OCI-LY7 (cell line): ENCODE measurements at regions of chr13 and their contacts with region 1.

Region 1: GRCh38 chr13:36796052-36796451 is 23.0 kb upstream of the RFXAP start:
- DNase-seq: no peak
- H3K4me3 ChIP-seq: no peak overlapping the region
- H3K27ac ChIP-seq: no peak overlapping the region
- H3K4me1 ChIP-seq: no peaks in the 10 kb centered on the region
- CTCF ChIP-seq: no peak

Region 2: DNA sequence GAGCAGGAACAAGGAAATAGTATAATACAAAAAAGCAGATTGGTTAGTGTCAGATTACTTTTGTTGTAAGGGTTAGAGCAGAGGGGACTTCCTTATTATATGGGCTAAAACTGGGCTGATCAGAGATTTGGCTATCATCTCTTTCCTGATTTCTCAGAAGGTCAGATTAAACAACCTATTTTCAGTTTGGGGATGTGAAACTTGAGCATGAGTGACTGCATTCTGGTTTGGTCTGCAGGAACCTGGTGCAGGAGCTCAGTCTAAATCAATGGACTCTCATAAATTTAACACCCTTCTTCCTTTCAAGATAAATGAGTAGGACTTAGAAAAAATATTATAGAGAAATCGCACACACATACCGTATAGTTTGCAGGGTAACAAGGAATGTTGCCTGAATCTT is 10.1 kb after region 1 on chr13:
- CTCF ChIA-PET with region 1: no interaction called
- POLR2A ChIA-PET with region 1: interaction called, 15 read pairs
- intact Hi-C with region 1: no loop called
- DNase-seq: peak; percentile 79
- H3K4me3 ChIP-seq: peak overlapping the region; percentile 28
- H3K27ac ChIP-seq: peak overlapping the region; percentile 41
- H3K4me1 ChIP-seq: peaks cover 19% of the 10 kb centered on the region
- CTCF ChIP-seq: no peak